Spleen (tissue), 13 donors: ENCODE measurements at regions of chr16 and their contacts with region 1.

Region 1: GRCh38 chr16:4358831-4359561 is 7.9 kb upstream of the PAM16 start:
- DNase-seq: peak; percentile 91
- H3K4me3 ChIP-seq: no peak overlapping the region
- H3K27ac ChIP-seq: no peak overlapping the region
- H3K4me1 ChIP-seq: peaks cover 0 to 15% (median 2%) of the 10 kb centered on the region in 6 donors
- H3K27me3 ChIP-seq: no peaks in the 10 kb centered on the region
- CTCF ChIP-seq: peak; percentile 87 to 97 (median 93)
- POLR2A ChIP-seq: no peak

Region 2: GRCh38 chr16:4261557-4262172 is 97.3 kb before region 1 on chr16:
- intact Hi-C with region 1: no loop called
- DNase-seq: no peak
- H3K4me3 ChIP-seq: no peak overlapping the region
- H3K27ac ChIP-seq: no peak overlapping the region
- H3K4me1 ChIP-seq: peaks cover 0 to 31% (median 13%) of the 10 kb centered on the region in 6 donors
- H3K27me3 ChIP-seq: no peaks in the 10 kb centered on the region
- CTCF ChIP-seq: peak in 10 of 11 experiments; percentile 30 to 74 (median 60)
- POLR2A ChIP-seq: no peak

Region 3: GRCh38 chr16:4391631-4392381 is 32.8 kb after region 1 on chr16:
- intact Hi-C with region 1: no loop called
- DNase-seq: peak; percentile 74
- H3K4me3 ChIP-seq: no peak overlapping the region
- H3K27ac ChIP-seq: peak overlapping the region in 4 of 8 donors; percentile 4 to 60 (median 25)
- H3K4me1 ChIP-seq: peaks cover 0 to 83% (median 32%) of the 10 kb centered on the region in 6 donors
- H3K27me3 ChIP-seq: no peaks in the 10 kb centered on the region
- CTCF ChIP-seq: no peak
- POLR2A ChIP-seq: no peak

Region 4: GRCh38 chr16:4402439-4403132 is 43.6 kb after region 1 on chr16:
- intact Hi-C with region 1: loop called (anchors 5 kb)
- DNase-seq: peak; percentile 94
- H3K4me3 ChIP-seq: peak overlapping the region in 1 of 8 donors; percentile 5
- H3K27ac ChIP-seq: peak overlapping the region in 1 of 8 donors; percentile 36
- H3K4me1 ChIP-seq: peaks cover 0 to 43% (median 9%) of the 10 kb centered on the region in 6 donors
- H3K27me3 ChIP-seq: no peaks in the 10 kb centered on the region
- CTCF ChIP-seq: peak; percentile 66 to 95 (median 92)
- POLR2A ChIP-seq: no peak